Activated B cell treated with CpG ODN at 0.5 μM for 24 hours (primary cell): ENCODE measurements at regions of chr17 and their contacts with region 1.

Region 1: DNA sequence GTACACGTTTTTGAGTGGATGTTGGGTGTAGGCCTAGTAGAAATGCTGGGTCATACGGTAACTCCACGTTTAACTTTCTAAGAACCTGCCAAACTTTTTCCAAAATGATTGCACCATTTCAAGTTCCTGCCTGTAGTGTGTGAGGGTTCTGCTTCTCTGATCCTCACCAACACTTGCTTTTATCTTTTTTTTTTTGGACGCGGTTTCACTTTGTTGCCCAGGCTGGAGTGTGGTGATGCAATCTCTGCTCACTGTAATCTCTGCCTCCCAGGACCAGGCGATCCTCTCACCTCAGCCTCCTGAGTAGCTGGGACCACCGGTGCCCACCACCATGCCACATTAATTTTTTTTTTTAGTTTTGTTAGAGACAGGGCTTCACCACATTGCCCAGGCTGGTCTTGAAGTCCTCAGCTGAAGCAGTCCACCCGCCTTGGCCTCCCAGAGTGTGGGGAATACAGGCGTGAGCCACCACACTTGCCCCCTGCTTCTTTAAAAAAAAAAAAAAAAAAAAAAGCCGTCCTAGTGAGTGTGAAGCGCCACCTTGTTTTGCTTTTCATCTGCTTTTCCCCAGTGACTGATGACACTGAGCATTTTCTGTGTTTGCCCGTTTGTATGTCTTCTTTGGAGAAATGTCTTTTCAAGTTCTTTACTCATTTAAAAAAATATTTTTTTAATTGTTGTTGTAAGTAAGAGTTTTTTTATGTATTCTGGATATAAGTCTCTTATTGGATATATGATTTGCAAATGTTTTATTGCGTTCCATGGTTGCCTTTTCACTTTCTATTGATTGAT is 23.3 kb downstream of the ZNF750 start:
- DNase-seq: no peak
- ATAC-seq: no peak
- H3K4me3 Mint-ChIP-seq: no peak overlapping the region
- H3K27ac Mint-ChIP-seq: no peak overlapping the region
- H3K4me1 Mint-ChIP-seq: peaks cover 29% of the 10 kb centered on the region
- H3K27me3 Mint-ChIP-seq: no peaks in the 10 kb centered on the region
- CTCF ChIP-seq: no peak

Region 2: GRCh38 chr17:82105882-82106687 is 710.5 kb before region 1 on chr17:
- CTCF ChIA-PET with region 1: no interaction called
- POLR2A ChIA-PET with region 1: no interaction called
- intact Hi-C with region 1: no loop called
- DNase-seq: peak; percentile 53
- ATAC-seq: peak; percentile 97
- H3K4me3 Mint-ChIP-seq: peak overlapping the region; percentile 88
- H3K27ac Mint-ChIP-seq: peak overlapping the region; percentile 94
- H3K4me1 Mint-ChIP-seq: peaks cover 32% of the 10 kb centered on the region
- H3K27me3 Mint-ChIP-seq: no peaks in the 10 kb centered on the region
- CTCF ChIP-seq: no peak

Region 3: GRCh38 chr17:82845163-82845807 is 28.7 kb after region 1 on chr17:
- CTCF ChIA-PET with region 1: no interaction called
- POLR2A ChIA-PET with region 1: no interaction called
- intact Hi-C with region 1: no loop called
- DNase-seq: no peak
- ATAC-seq: no peak
- H3K4me3 Mint-ChIP-seq: no peak overlapping the region
- H3K27ac Mint-ChIP-seq: no peak overlapping the region
- H3K4me1 Mint-ChIP-seq: peaks cover 12% of the 10 kb centered on the region
- H3K27me3 Mint-ChIP-seq: no peaks in the 10 kb centered on the region
- CTCF ChIP-seq: no peak

Region 4: GRCh38 chr17:82882715-82883418 is 66.3 kb after region 1 on chr17:
- CTCF ChIA-PET with region 1: interaction called, 4 read pairs
- POLR2A ChIA-PET with region 1: interaction called, 12 read pairs
- intact Hi-C with region 1: no loop called
- DNase-seq: no peak
- ATAC-seq: peak; percentile 47
- H3K4me3 Mint-ChIP-seq: peak overlapping the region; percentile 24
- H3K27ac Mint-ChIP-seq: no peak overlapping the region
- H3K4me1 Mint-ChIP-seq: peaks cover 55% of the 10 kb centered on the region
- H3K27me3 Mint-ChIP-seq: no peaks in the 10 kb centered on the region
- CTCF ChIP-seq: no peak

Region 5: DNA sequence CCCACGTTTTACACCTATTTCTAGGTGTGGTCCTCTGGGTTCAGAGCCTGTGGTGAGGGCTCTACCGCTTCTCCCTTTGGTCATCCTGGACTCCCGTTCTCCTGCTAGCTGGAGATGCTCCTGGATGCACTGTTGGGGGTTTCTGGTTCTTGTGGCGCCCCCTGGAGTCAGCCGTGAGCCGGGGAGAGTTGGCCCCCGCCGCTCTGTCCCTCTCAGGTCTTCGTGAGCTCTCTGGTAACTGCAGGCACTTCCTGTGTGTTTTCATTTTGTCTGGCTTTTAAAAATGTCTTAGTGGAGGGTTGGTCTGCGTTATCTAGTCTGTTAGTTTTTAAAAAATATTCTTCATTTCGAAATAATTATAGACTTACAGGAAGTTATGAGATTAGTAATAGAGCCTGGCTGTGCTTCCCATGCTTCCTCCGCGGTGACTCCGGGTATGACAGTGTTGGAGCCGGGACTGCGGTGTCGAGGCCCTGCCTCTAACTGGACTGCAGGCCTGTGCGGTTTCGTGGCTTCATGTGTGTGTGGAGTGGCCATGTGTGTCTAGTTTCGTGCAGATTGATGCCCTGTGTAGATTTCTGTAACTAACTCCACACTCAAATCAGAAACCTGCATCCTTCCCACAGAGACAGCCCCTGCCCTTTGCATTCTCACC is 101.3 kb after region 1 on chr17:
- CTCF ChIA-PET with region 1: interaction called, 10 read pairs
- POLR2A ChIA-PET with region 1: interaction called, 3 read pairs
- intact Hi-C with region 1: no loop called
- DNase-seq: no peak
- ATAC-seq: no peak
- H3K4me3 Mint-ChIP-seq: no peak overlapping the region
- H3K27ac Mint-ChIP-seq: no peak overlapping the region
- H3K4me1 Mint-ChIP-seq: peaks cover 27% of the 10 kb centered on the region
- H3K27me3 Mint-ChIP-seq: no peaks in the 10 kb centered on the region
- CTCF ChIP-seq: no peak